ENCODE measurements at regions of chr15 and their contacts with region 1.

Region 1: DNA sequence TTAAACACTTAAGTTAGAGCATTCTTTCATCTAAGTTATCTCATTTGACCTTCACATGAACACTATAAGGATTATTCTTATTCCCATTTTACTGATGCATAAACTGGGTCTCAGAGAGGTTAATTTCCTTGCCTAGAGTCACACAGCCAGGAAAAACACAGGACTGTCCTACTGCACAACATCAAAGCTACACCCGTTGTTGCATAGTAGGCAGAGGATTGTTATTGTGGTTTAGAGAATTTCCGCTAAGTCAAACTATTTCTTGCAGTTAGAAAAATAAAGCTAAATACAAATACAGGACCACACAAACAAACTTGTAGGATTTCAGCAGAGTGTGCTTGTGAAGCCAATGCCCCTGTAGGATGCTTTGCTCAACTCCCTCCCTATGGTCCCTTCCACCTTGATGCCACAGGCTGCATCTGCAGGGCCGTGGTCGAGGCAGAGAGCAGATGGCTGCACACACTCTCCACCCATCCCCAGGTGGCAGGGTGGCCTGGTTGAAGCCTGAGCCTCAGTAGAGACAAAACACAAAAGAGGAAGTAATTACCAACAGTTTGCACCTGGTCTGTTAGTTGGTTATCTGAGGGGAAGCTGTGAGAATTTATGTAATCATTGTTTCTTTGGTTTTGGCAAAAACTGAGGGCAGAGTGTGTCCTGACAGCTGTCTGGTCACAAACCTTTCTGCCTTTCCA is 41.1 kb upstream of the SKOR1 start:
- DNase-seq: peak; percentile 99
- H3K4me3 ChIP-seq: peak overlapping the region; percentile 68
- H3K27ac ChIP-seq: peak overlapping the region; percentile 96
- H3K4me1 ChIP-seq: peaks cover 91% of the 10 kb centered on the region
- CTCF ChIP-seq: peak; percentile 24; the same call in 1 of the 2 replicates

Region 2: DNA sequence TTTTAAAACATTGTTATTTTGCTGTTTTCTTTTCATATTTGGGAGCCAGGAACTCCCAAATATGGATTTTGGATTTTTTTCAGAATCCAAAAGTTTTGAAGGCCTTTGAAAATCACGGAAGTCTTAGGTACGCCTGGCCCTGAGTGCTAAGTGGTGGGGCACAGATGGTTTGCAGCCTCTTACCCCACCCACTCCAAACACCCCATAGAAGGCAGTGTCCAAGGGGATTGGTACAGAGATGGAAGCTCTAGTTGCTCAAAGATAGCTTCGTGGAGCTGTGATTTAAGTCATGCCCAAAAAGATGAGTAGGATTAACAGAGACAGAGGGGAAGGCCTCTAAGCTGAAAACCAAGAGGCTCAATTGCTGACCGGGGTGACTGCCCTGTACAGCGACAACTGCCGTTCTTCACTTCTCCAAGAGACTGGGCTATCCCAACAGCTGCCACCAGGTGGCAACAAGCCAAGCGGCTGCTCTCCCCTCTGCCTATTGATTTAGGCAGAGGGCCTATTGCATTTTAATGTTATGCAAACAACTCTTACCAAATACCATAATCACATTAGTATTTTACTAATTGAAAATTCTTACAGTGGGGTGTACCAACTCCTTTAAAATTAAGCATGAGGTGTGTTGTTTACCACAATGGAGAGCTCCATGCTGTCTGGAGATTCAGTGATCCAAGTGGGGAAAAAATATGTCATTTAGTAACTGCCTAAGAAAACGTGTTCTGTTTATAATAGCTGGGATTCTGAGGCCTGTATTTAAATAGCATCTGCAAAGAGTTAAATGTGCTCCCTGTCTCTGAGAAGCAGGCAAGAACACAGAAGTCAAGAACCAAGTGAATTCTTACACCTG is 327.3 kb before region 1 on chr15:
- CTCF ChIA-PET with region 1: no interaction called
- POLR2A ChIA-PET with region 1: no interaction called
- intact Hi-C with region 1: loop called (anchors 2 kb)
- DNase-seq: peak; percentile 79
- H3K4me3 ChIP-seq: no peak overlapping the region
- H3K27ac ChIP-seq: no peak overlapping the region
- H3K4me1 ChIP-seq: no peaks in the 10 kb centered on the region
- CTCF ChIP-seq: peak; percentile 98

Region 3: GRCh38 chr15:67521029-67521811 is 263.0 kb before region 1 on chr15 and contains the start of gene C15orf61:
- CTCF ChIA-PET with region 1: no interaction called
- POLR2A ChIA-PET with region 1: no interaction called
- intact Hi-C with region 1: loop called (anchors 5 kb)
- DNase-seq: peak; percentile 92
- H3K4me3 ChIP-seq: peak within 1 kb of the TSS; percentile 83
- H3K27ac ChIP-seq: peak within 1 kb of the TSS; percentile 65
- H3K4me1 ChIP-seq: peaks cover 25% of the 10 kb centered on the region
- CTCF ChIP-seq: 0 out of 2 replicates have a peak, but pooled peaks have one; percentile 47
- total RNA-seq, gene C15orf61: 13.3 and 18.3 TPM in 2 replicates

Region 4: DNA sequence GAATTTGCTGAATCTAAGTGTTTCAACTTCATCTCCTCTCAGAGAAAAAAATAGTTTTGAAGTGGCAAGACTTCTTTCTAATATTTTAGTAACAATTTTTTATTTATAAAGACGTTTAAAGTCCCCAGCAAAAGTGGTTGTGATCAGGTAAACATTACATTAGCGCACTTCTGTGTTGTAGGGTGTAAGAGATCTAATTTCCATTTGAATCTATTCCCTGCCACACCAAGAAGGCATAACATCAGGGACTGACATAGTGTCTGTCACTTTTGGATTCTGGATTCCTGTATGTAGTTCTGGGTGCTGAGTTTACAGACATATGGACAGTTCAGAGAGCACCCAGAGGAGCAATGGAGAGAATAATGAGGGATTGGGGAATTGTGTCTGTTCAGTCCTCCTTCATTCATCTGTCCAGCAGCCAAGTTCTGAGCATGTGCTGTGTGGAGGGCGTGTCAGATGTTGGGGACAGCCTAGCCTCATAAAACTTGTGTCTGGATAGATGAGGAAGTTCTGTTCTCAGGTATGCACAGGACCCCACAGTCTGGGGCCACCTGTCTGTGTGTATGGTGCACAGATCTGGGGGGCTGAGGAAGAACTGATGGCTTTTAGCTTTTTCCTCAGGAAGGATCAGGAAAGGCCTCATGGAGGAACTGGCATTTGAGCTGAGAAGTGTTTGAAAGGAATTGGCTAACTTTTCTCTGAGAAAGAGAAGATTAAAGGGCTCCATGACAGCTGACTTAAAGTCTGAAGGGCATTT is 176.1 kb before region 1 on chr15:
- CTCF ChIA-PET with region 1: no interaction called
- POLR2A ChIA-PET with region 1: no interaction called
- intact Hi-C with region 1: no loop called
- DNase-seq: no peak
- H3K4me3 ChIP-seq: no peak overlapping the region
- H3K27ac ChIP-seq: no peak overlapping the region
- H3K4me1 ChIP-seq: no peaks in the 10 kb centered on the region
- CTCF ChIP-seq: no peak

Region 5: DNA sequence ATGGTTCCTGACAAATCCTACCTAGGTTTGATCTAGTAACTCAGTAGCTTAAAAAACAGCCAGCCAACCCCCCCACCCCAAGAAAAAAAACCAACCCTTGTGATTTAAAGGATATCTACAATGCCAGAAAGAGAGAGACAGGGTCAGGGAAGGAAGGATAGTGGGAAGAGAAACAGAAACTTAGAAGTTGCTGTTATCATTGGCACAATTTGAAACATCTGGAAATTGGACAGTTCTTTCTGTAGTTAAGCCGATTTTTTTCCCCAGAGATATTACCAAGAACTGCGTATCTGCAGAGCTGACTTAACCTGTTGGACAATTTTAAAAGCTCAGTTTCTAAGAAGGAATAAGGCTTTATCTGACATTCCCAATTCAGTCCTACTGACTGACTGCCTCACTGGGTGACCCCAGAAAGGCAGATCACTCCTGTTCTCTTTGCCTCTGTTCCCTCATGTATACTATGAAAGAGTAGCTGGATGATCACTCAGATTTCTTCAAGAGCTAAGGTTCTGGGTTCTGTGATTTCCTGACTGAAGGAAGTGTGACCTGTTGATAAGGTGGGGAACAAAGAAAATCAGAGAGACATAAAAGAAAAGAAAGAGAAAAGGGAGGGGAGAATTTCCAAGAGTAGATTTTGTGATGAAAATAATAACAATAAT is 113.5 kb before region 1 on chr15:
- CTCF ChIA-PET with region 1: no interaction called
- POLR2A ChIA-PET with region 1: no interaction called
- intact Hi-C with region 1: no loop called
- DNase-seq: no peak
- H3K4me3 ChIP-seq: no peak overlapping the region
- H3K27ac ChIP-seq: no peak overlapping the region
- H3K4me1 ChIP-seq: no peaks in the 10 kb centered on the region
- CTCF ChIP-seq: no peak

Region 6: DNA sequence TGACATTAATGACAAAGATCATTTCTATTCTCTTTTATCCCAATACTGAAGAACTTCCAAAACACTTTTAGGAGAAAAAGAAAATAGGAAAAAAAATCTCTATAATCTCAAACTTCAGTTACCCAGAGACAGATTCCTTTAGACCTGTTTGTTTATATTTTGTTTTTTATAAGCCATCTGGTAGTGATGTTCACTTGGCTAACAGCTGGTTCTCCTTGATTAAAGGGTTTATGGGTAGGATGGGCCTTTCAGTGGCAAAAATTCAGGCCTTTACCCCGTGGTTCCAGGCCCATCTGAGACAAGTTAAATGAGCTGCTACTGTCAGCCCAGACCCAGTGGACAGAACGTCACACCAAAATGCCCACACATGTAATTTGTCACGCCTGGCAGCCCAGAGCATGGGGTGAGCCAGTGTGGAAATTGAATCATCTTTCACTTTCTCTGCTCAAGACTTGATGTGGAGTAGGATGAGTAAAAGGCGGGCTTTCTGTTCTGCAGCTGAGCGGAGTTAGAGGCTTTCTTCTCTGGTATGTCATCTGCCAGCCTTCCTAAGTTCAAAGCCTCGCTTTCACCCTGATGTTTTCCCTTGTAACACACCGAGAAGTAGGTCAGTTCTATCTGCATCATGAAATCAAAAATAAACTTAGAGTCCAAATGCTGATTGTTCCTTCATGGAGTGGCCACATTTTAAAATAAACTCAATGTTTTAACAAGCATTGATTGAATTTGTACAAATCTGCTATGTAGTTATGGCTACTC is 21.4 kb before region 1 on chr15:
- CTCF ChIA-PET with region 1: interaction called, 3 read pairs
- POLR2A ChIA-PET with region 1: interaction called, 6 read pairs
- intact Hi-C with region 1: loop called (anchors 1 kb)
- DNase-seq: peak; percentile 78
- H3K4me3 ChIP-seq: peak overlapping the region; percentile 39
- H3K27ac ChIP-seq: peak overlapping the region; percentile 65
- H3K4me1 ChIP-seq: peaks cover 85% of the 10 kb centered on the region
- CTCF ChIP-seq: no peak

Region 7: DNA sequence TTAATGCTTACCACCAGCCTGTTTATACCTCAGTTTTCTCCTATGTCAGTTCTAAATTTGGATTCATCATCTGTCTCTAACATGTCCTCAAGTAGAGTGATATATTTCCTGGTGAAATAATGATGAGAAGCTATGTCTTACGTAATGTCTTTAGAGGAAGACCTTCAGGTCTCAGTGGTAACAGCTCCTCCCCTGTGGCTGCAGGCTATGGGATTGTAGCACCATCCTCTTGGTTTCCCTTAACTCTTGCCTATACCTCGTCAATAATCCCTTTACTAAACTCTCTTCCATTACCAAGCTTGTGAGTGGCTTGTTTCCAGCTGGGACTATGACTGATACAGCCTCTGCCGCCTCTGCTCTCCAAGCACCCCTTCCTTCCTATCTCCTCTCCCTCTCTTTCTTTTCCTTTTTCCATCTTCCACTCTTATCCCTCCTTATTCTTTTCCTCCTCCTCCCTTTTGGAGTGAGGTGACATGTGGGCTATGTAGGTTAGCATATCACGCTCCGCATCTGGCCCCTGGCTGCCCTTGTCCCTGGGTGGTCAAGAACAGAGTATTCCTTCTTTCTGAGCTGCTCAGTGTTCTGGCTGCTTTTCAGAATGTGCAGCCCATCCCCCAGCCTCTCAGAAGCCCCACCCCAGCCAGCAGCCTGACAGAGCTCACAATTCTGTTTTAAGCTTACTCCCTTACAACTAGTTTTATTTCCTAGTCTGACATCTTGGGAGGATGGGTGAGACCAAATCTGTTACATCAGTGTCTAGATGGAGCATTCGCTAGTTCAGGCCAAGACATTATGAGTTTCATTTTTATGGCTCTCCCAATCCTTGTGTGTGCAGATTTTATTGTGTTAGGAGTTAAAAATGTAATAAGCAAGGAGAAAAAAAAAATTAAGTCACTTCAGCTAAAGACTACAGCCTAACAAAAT is 130.6 kb after region 1 on chr15:
- CTCF ChIA-PET with region 1: no interaction called
- POLR2A ChIA-PET with region 1: no interaction called
- intact Hi-C with region 1: no loop called
- DNase-seq: no peak
- H3K4me3 ChIP-seq: no peak overlapping the region
- H3K27ac ChIP-seq: no peak overlapping the region
- H3K4me1 ChIP-seq: no peaks in the 10 kb centered on the region
- CTCF ChIP-seq: no peak

Region 8: GRCh38 chr15:68053701-68054627 is 269.7 kb after region 1 on chr15 and contains the start of gene PIAS1:
- CTCF ChIA-PET with region 1: no interaction called
- POLR2A ChIA-PET with region 1: no interaction called
- intact Hi-C with region 1: loop called (anchors 10 kb)
- DNase-seq: peak; percentile 96
- H3K4me3 ChIP-seq: peak within 1 kb of the TSS; percentile 88
- H3K27ac ChIP-seq: peak within 1 kb of the TSS; percentile 72
- H3K4me1 ChIP-seq: peaks cover 45% of the 10 kb centered on the region
- CTCF ChIP-seq: peak; percentile 44; the same call in 1 of the 2 replicates
- total RNA-seq, gene PIAS1: 36.2 and 44.1 TPM in 2 replicates

Region 9: DNA sequence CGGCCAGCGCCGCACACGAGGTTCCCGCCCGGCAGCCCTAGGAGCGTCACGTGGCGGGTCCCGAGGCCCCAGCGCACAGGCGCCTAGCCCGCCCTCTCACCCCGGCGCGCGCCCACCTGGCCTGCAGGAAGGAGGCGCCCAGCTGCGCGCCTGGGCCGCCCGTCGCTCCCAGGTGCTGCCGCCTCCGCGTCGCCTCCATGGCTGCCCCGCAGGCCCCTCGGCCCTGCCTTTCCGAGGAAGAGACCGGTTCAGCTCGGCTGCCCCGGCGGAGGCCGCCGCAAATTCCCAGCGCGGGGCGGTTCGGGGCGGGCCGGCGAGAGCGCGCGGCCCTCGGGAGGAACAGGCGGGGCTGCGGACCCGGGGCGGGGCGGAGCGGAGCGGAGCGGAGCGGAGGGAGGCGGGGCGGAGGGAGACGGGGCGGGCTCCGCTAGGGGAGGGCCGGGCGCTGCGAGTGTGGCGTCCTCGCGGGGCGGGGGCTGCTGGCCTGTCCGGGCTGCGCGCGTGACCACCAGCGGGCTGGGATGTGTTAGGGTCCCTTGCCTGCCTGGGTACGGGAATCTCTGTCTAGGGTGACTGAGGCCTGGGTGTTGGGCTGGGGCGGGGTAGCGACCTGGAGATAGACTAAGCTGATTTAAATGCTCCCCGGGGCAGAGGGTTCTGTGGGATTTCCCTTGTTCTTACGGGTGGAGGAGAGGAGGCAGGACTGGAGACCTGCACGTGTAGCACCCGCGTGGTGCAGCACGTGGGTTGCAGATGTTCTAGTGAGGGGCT is 445.3 kb after region 1 on chr15 and contains the start of gene CLN6:
- CTCF ChIA-PET with region 1: no interaction called
- POLR2A ChIA-PET with region 1: no interaction called
- intact Hi-C with region 1: loop called (anchors 5 kb)
- DNase-seq: peak; percentile 92
- H3K4me3 ChIP-seq: peak within 1 kb of the TSS; percentile 80
- H3K27ac ChIP-seq: peak within 1 kb of the TSS; percentile 80
- H3K4me1 ChIP-seq: peaks cover 49% of the 10 kb centered on the region
- CTCF ChIP-seq: no peak; the same call in 1 of the 2 replicates
- total RNA-seq, gene CLN6: 50.3 and 60.2 TPM in 2 replicates

Measured in OCI-LY7 (cell line).